ENCODE measurements at regions of chr5 and their contacts with region 1.

Region 1: GRCh38 chr5:159695741-159696294 is 220.5 kb upstream of the ADRA1B start:
- DNase-seq: no peak
- H3K4me3 ChIP-seq: no peak overlapping the region
- H3K27ac ChIP-seq: no peak overlapping the region
- H3K4me1 ChIP-seq: no peaks in the 10 kb centered on the region
- CTCF ChIP-seq: no peak

Region 2: DNA sequence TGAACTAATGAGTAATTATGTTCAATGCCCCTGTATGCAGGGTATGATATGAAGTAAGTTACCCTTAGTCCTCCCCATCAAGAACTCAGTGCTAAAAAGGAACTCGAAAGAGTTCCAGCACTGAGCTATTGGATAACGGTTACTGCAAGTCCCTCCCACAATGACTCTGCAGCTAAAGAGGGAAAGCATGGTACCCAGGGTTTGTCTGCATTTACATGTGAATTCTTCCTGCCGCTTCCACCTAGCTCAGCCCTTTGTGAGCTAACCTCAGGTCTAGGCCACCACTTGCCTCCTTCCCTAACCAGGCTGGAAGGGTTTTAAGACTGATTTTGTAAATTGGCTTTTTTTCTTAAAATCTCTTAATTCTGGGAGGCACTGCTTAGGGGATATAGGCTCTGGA is 972.9 kb before region 1 on chr5:
- CTCF ChIA-PET with region 1: no interaction called
- POLR2A ChIA-PET with region 1: interaction called, 10 read pairs
- intact Hi-C with region 1: no loop called
- DNase-seq: no peak
- H3K4me3 ChIP-seq: no peak overlapping the region
- H3K27ac ChIP-seq: no peak overlapping the region
- H3K4me1 ChIP-seq: no peaks in the 10 kb centered on the region
- CTCF ChIP-seq: no peak